Activated CD4-positive, alpha-beta memory T cell treated with anti-CD3 and anti-CD28 coated beads, Interleukin-2, amount 10 ng/mL, durations not matched to agents 7 days and 5 days (primary cell): ENCODE measurements at regions of chr1 and their contacts with region 1.

Region 1: DNA sequence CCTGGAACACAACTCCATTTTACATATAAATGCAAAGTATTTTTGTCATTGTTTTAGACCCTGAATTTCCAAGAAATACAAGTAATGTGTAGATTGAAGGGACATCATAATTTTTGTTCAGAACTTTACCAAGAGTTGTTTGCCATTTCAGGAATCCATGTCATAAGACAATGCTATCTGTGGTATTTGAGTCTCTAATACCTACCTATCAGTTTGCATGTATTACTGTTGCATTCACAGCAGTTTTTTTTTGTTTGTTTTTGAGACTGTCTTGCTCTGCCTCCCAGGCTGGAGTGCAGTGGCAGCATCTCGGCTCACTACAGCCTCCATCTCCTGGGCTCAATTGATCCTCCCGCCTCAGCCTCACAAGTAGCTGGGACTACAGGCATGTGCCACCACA is 17.1 kb downstream of the MPZ start:
- DNase-seq: no peak
- H3K4me3 Mint-ChIP-seq: no peak overlapping the region
- H3K27ac Mint-ChIP-seq: no peak overlapping the region
- H3K4me1 Mint-ChIP-seq: peaks cover 2% of the 10 kb centered on the region
- H3K27me3 Mint-ChIP-seq: no peaks in the 10 kb centered on the region

Region 2: GRCh38 chr1:160981584-160982411 is 310.8 kb before region 1 on chr1:
- CTCF ChIA-PET with region 1: no interaction called
- POLR2A ChIA-PET with region 1: no interaction called
- DNase-seq: no peak
- H3K4me3 Mint-ChIP-seq: peak overlapping the region; percentile 53
- H3K27ac Mint-ChIP-seq: no peak overlapping the region
- H3K4me1 Mint-ChIP-seq: peaks cover 9% of the 10 kb centered on the region
- H3K27me3 Mint-ChIP-seq: peaks cover 33% of the 10 kb centered on the region

Region 3: GRCh38 chr1:161177112-161177935 is 115.3 kb before region 1 on chr1 and contains the start of gene B4GALT3:
- CTCF ChIA-PET with region 1: interaction called, 10 read pairs
- POLR2A ChIA-PET with region 1: interaction called, 4 read pairs
- DNase-seq: peak; percentile 94
- H3K4me3 Mint-ChIP-seq: peak within 1 kb of the TSS; percentile 97
- H3K27ac Mint-ChIP-seq: peak within 1 kb of the TSS; percentile 96
- H3K4me1 Mint-ChIP-seq: peaks cover 78% of the 10 kb centered on the region
- H3K27me3 Mint-ChIP-seq: no peaks in the 10 kb centered on the region
- total RNA-seq, gene B4GALT3: 55.0 to 56.7 TPM

Region 4: GRCh38 chr1:161258439-161259344 is 33.9 kb before region 1 on chr1 and contains the start of gene PCP4L1:
- CTCF ChIA-PET with region 1: interaction called, 10 read pairs
- POLR2A ChIA-PET with region 1: no interaction called
- DNase-seq: peak; percentile 31
- H3K4me3 Mint-ChIP-seq: peak within 1 kb of the TSS; percentile 34
- H3K27ac Mint-ChIP-seq: no peak within 1 kb of the TSS
- H3K4me1 Mint-ChIP-seq: peaks cover 15% of the 10 kb centered on the region
- H3K27me3 Mint-ChIP-seq: peaks cover 66% of the 10 kb centered on the region
- total RNA-seq, gene PCP4L1: 0.28 TPM in 1 of 2 experiments, not detected in the other

Region 5: DNA sequence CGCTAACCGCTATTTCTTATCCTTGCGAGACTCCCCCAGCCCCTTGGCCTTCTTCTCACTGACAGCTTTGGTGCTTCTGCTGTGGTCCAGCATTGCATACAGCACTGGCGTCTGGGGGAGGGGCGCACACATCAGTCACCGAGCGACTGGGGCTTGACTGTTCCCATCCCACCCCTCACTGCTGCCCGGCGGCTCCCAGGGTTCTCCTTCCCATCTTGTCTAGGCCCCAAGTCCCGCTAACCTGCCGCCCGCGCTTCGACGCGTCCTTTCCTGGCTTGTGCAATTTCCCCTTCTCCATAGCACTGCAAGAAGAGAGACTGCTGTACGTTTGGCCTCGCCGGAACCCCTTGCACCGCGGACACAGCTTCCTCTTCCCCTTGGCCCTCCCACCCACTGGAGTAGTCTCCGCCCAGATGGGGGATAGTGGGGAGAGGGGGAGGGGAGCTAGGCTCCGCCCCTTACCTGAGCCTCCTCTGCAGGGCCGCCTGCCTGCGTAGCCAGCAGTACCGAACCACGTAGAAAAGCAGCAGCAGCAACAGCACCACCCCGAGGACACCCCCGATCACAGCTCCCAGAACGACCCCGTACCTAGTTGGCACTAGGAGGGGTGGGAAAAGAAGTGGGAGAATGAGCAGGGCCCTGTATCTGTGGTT is 13.4 kb after region 1 on chr1:
- CTCF ChIA-PET with region 1: interaction called, 36 read pairs
- POLR2A ChIA-PET with region 1: interaction called, 6 read pairs
- DNase-seq: peak; percentile 89
- H3K4me3 Mint-ChIP-seq: peak overlapping the region; percentile 89
- H3K27ac Mint-ChIP-seq: peak overlapping the region; percentile 70
- H3K4me1 Mint-ChIP-seq: peaks cover 37% of the 10 kb centered on the region
- H3K27me3 Mint-ChIP-seq: peaks cover 3% of the 10 kb centered on the region